ENCODE measurements at regions of chrX and their contacts with region 1.

Region 1: DNA sequence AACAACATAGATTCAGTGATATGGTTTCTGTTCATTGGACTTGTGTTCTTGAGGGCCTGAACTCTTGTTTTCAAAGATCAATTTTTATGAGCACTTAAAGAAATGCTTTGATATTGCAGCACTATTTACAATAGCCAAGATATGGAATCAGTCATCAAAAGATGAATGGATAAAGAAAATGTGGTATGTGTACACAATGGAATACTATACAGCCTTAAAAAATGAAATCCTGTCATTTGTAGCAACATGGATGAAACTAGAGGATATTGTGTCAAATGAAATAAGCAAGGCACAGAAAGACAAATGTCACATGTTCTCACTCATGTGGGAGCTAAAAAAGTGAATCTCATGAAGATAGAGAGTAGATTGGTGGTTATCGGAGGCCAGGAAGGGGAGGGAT is 21.9 kb downstream of the RNF128 start:
- DNase-seq: no peak
- ATAC-seq: no peak
- H3K4me3 ChIP-seq: no peak overlapping the region
- H3K27ac ChIP-seq: no peak overlapping the region
- H3K4me1 ChIP-seq: no peaks in the 10 kb centered on the region
- H3K27me3 ChIP-seq: peaks cover 0 to 36% (median 0%) of the 10 kb centered on the region in 7 donors
- CTCF ChIP-seq: no peak

Region 2: GRCh38 chrX:105006103-105006502 is 1742.3 kb before region 1 on chrX:
- intact Hi-C with region 1: loop called in 1 of 10 experiments (anchors 5 kb)
- DNase-seq: no peak
- ATAC-seq: no peak
- H3K4me3 ChIP-seq: no peak overlapping the region
- H3K27ac ChIP-seq: no peak overlapping the region
- H3K4me1 ChIP-seq: no peaks in the 10 kb centered on the region
- H3K27me3 ChIP-seq: peaks cover 0 to 27% (median 0%) of the 10 kb centered on the region in 7 donors
- CTCF ChIP-seq: no peak